Right cardiac atrium (tissue), 5 donors: ENCODE measurements at regions of chr5 and their contacts with region 1.

Region 1: DNA sequence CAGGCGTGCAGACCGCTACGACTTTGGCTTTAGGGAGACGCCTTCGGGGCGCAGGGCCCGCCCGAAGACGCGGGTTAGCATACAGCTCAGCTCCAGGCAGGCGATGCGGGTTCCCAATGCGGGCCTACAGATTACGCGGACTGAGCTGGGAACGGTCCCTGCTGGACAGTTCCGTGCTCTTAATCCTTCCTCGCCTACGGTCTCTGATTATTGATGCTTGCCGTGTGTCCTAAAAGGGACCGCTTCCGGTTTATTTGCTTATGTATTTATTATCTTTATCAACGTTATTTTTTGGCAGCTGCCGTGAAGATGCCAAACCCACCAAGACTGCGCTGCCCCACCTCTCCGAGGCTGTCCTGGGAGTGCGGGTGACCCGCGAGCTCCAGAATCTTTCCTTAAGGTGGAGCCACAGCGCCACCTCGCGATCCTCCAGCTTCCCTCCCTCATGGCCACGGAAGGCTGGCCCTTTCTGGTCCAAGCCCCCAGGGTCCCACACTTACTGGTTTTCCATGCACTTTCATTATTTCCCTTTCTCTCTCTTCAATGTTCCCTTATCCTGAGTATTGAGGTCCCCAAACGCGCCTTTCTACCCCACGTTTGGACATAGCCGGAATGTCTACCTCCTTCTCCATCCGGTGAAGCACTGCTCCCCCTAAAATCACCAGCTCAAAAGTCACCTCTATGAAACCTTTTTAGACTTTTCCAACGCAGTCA is 7.0 kb upstream of the EBF1 start:
- DNase-seq: peak; percentile 84 to 94 (median 89)
- ATAC-seq: peak; percentile 89
- H3K4me3 ChIP-seq: peak overlapping the region; percentile 36
- H3K27ac ChIP-seq: no peak overlapping the region
- H3K4me1 ChIP-seq: no peaks in the 10 kb centered on the region
- H3K27me3 ChIP-seq: no peaks in the 10 kb centered on the region

Region 2: DNA sequence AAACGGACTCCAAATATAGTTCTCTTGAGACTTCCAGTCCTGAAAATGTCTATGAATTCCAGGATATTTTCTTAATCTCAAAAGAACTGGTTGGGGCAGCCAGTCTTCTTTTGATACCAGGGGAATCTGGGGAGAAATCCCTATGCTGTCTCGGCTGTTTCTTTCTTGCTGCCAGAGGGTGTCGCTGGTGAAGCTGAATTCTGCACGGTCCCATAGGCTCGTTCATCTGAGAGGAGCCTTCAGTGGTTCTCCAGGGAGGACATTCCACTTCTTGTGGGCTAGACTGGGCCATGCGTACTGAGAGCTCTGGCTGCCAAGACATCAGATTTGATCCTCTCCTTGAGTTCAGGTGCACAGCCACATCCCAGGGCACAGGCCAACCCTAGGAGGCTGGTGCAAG is 1092.8 kb before region 1 on chr5:
- intact Hi-C with region 1: loop called in 1 of 4 experiments (anchors 10 kb)
- DNase-seq: peak in 1 of 3 donors; percentile 45
- ATAC-seq: peak; percentile 32 to 83
- H3K4me3 ChIP-seq: no peak overlapping the region
- H3K27ac ChIP-seq: no peak overlapping the region
- H3K4me1 ChIP-seq: no peaks in the 10 kb centered on the region
- H3K27me3 ChIP-seq: no peaks in the 10 kb centered on the region

Region 3: DNA sequence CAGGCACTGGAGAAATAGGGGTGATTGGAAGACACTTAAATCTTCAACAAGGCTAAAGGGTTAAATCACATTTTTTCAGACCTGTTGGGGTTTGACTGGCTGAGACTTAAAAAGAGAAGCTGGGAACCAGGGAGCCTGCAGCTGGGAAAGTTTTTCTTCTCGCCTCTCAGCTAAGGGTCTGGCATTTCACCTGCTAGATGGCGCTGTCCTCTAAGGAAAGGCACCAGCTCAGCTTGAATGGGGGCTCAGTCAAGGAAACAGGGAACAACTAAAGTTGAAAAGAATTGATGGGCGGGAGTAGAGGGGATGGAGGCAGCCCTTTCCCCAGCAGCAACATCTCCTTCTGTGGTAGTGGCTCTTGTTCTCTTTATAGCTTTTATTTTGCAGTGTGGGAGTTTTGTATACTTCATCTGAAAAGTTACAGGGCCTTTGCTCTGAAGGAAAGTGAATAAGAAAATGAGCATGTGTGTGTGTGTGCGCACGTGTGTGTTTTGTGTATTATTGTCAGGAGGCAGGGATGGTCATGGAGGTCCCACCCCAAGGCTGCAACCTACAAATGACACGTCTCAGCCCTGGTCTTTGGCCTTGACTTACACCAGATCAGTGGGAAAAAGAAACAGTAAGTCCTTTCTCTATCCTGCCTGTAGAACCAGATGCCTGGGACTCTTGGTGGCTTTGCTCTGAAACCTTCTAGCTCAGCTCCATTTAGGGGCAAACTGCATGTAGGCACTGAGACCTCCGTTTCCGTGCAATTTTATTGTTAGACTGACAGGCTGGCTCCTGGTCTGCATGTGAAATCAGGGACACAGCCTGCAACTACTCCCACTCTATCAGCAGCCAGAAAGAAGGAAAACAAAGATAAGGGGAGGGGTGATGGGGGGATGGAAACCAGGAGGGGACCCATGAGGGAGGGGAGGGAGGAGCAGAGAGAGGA is 931.5 kb before region 1 on chr5:
- intact Hi-C with region 1: loop called in 3 of 4 experiments (anchors 5 kb)
- DNase-seq: peak; percentile 69 to 88 (median 81)
- ATAC-seq: peak; percentile 87 to 92
- H3K4me3 ChIP-seq: no peak overlapping the region
- H3K27ac ChIP-seq: peak overlapping the region; percentile 59
- H3K4me1 ChIP-seq: peaks cover 3% of the 10 kb centered on the region
- H3K27me3 ChIP-seq: no peaks in the 10 kb centered on the region

Region 4: GRCh38 chr5:158695595-158696330 is 411.0 kb before region 1 on chr5:
- intact Hi-C with region 1: loop called in 3 of 4 experiments (anchors 2 to 5 kb)
- DNase-seq: peak; percentile 73 to 90 (median 86)
- ATAC-seq: peak; percentile 66 to 86
- H3K4me3 ChIP-seq: no peak overlapping the region
- H3K27ac ChIP-seq: no peak overlapping the region
- H3K4me1 ChIP-seq: peaks cover 2% of the 10 kb centered on the region
- H3K27me3 ChIP-seq: no peaks in the 10 kb centered on the region

Region 5: GRCh38 chr5:158848634-158849033 is 258.1 kb before region 1 on chr5:
- intact Hi-C with region 1: no loop called
- DNase-seq: no peak
- ATAC-seq: no peak
- H3K4me3 ChIP-seq: no peak overlapping the region
- H3K27ac ChIP-seq: no peak overlapping the region
- H3K4me1 ChIP-seq: peaks cover 3% of the 10 kb centered on the region
- H3K27me3 ChIP-seq: no peaks in the 10 kb centered on the region

Region 6: GRCh38 chr5:158875272-158875679 is 231.4 kb before region 1 on chr5:
- intact Hi-C with region 1: loop called in 1 of 4 experiments (anchors 10 kb)
- DNase-seq: no peak
- ATAC-seq: peak in 1 of 2 donors; percentile 51
- H3K4me3 ChIP-seq: peak overlapping the region; percentile 48
- H3K27ac ChIP-seq: no peak overlapping the region
- H3K4me1 ChIP-seq: peaks cover 2% of the 10 kb centered on the region
- H3K27me3 ChIP-seq: no peaks in the 10 kb centered on the region

Region 7: GRCh38 chr5:159017786-159018185 is 88.9 kb before region 1 on chr5:
- intact Hi-C with region 1: no loop called
- DNase-seq: peak; percentile 84 to 89 (median 89)
- ATAC-seq: peak; percentile 84 to 94
- H3K4me3 ChIP-seq: no peak overlapping the region
- H3K27ac ChIP-seq: no peak overlapping the region
- H3K4me1 ChIP-seq: peaks cover 4% of the 10 kb centered on the region
- H3K27me3 ChIP-seq: no peaks in the 10 kb centered on the region